Natural killer cell (primary cell): ENCODE measurements at regions of chr19 and their contacts with region 1.

Region 1: GRCh38 chr19:18007044-18007916 is 690 bp upstream of the ARRDC2 start:
- DNase-seq: peak; percentile 82 to 92
- ATAC-seq: peak; percentile 60 to 82 (median 66)
- H3K4me3 ChIP-seq: peak overlapping the region; percentile 33
- H3K4me3 Mint-ChIP-seq: peak overlapping the region; percentile 95
- H3K27ac ChIP-seq: peak overlapping the region; percentile 77
- H3K27ac Mint-ChIP-seq: peak overlapping the region; percentile 94 to 95
- H3K4me1 ChIP-seq: peaks cover 41% of the 10 kb centered on the region
- H3K4me1 Mint-ChIP-seq: peaks cover 11 to 25% of the 10 kb centered on the region in 2 donors
- H3K27me3 ChIP-seq: no peaks in the 10 kb centered on the region
- H3K27me3 Mint-ChIP-seq: no peaks in the 10 kb centered on the region
- CTCF ChIP-seq: peak; percentile 99

Region 2: GRCh38 chr19:17966550-17967256 is 40.6 kb before region 1 on chr19 and contains the start of gene KCNN1:
- intact Hi-C with region 1: no loop called
- DNase-seq: peak in 1 of 2 donors; percentile 28
- ATAC-seq: peak in 1 of 3 donors; percentile 59
- H3K4me3 ChIP-seq: no peak within 1 kb of the TSS
- H3K4me3 Mint-ChIP-seq: peak within 1 kb of the TSS; percentile 42
- H3K27ac ChIP-seq: no peak within 1 kb of the TSS
- H3K27ac Mint-ChIP-seq: no peak within 1 kb of the TSS
- H3K4me1 ChIP-seq: peaks cover 4% of the 10 kb centered on the region
- H3K4me1 Mint-ChIP-seq: peaks cover 0 to 5% of the 10 kb centered on the region in 2 donors
- H3K27me3 ChIP-seq: peaks cover 15% of the 10 kb centered on the region
- H3K27me3 Mint-ChIP-seq: peaks cover 29 to 31% of the 10 kb centered on the region in 2 donors
- CTCF ChIP-seq: no peak
- total RNA-seq, gene KCNN1: not detected

Region 3: DNA sequence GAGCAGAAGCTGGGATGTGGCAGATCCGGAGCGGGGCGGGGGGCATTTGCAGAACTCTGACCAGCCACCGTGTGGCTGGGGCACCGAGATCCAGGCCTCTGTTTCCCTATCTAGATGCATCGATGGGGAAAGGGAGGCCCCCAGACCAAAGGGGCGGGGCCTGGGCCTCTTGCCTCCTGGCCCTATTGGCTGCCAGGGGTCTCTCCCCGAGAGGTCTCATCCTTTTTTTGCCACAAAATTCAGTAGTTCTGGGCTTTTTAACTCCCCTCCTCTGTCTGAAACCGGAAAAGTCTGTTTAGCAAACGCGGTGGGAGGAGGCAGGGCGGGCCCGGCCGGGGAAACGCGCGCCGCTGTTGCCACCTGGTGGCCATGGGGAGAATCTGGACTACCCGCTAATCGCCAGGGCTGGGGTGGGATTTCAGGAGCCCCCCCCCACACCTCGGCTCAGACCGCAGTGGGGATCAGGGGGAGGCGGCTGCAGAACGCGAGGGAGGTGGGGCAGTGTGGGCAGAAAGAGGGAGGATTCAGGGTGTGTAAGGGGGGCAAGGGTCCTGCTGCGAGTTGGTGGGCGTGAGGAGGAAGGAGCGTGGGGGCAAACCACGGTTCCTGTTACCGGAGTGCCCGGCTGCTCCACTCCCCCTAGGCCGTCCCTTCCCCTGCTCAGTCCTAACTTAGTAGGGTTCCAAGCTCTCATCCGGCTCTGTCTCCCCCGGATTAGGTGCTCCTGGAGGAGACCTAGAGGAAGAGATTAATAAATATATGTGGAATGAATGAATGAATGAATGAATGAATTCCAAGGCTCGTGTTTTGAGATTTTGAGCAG is 51.1 kb after region 1 on chr19:
- intact Hi-C with region 1: loop called (anchors 1 kb)
- DNase-seq: peak; percentile 80 to 90
- ATAC-seq: peak; percentile 94 to 99 (median 97)
- H3K4me3 ChIP-seq: peak overlapping the region; percentile 11
- H3K4me3 Mint-ChIP-seq: peak overlapping the region; percentile 38
- H3K27ac ChIP-seq: peak overlapping the region; percentile 57
- H3K27ac Mint-ChIP-seq: peak overlapping the region; percentile 56 to 89
- H3K4me1 ChIP-seq: peaks cover 12% of the 10 kb centered on the region
- H3K4me1 Mint-ChIP-seq: peaks cover 9 to 11% of the 10 kb centered on the region in 2 donors
- H3K27me3 ChIP-seq: no peaks in the 10 kb centered on the region
- H3K27me3 Mint-ChIP-seq: no peaks in the 10 kb centered on the region
- CTCF ChIP-seq: peak; percentile 94

Region 4: GRCh38 chr19:18173572-18174288 is 166.4 kb after region 1 on chr19 and contains the start of gene IFI30:
- intact Hi-C with region 1: loop called (anchors 5 kb)
- DNase-seq: peak; percentile 59 to 73
- ATAC-seq: peak; percentile 76 to 80 (median 76)
- H3K4me3 ChIP-seq: peak within 1 kb of the TSS; percentile 50
- H3K4me3 Mint-ChIP-seq: peak within 1 kb of the TSS; percentile 90
- H3K27ac ChIP-seq: peak within 1 kb of the TSS; percentile 86
- H3K27ac Mint-ChIP-seq: peak within 1 kb of the TSS; percentile 57 to 86
- H3K4me1 ChIP-seq: peaks cover 61% of the 10 kb centered on the region
- H3K4me1 Mint-ChIP-seq: peaks cover 10 to 33% of the 10 kb centered on the region in 2 donors
- H3K27me3 ChIP-seq: no peaks in the 10 kb centered on the region
- H3K27me3 Mint-ChIP-seq: no peaks in the 10 kb centered on the region
- CTCF ChIP-seq: no peak
- total RNA-seq, gene IFI30: 38.2 to 109 (median 89.5) TPM